ENCODE measurements at regions of chr5 and their contacts with region 1.

Region 1: GRCh38 chr5:40755407-40756365 is at the start of gene TTC33:
- DNase-seq: peak; percentile 97
- H3K4me3 ChIP-seq: peak within 1 kb of the TSS; percentile 87 to 98
- H3K27ac ChIP-seq: peak within 1 kb of the TSS; percentile 94 to 95
- H3K4me1 ChIP-seq: peaks cover 0 to 32% (median 14%) of the 10 kb centered on the region in 4 donors
- H3K27me3 ChIP-seq: no peaks in the 10 kb centered on the region
- CTCF ChIP-seq: peak; percentile 61 to 69

Region 2: GRCh38 chr5:40770764-40771163 is 15.1 kb after region 1 on chr5:
- intact Hi-C with region 1: no loop called
- DNase-seq: no peak
- H3K4me3 ChIP-seq: no peak overlapping the region
- H3K27ac ChIP-seq: no peak overlapping the region
- H3K4me1 ChIP-seq: peaks cover 0 to 2% (median under 1%) of the 10 kb centered on the region in 4 donors
- H3K27me3 ChIP-seq: no peaks in the 10 kb centered on the region
- CTCF ChIP-seq: no peak

Region 3: DNA sequence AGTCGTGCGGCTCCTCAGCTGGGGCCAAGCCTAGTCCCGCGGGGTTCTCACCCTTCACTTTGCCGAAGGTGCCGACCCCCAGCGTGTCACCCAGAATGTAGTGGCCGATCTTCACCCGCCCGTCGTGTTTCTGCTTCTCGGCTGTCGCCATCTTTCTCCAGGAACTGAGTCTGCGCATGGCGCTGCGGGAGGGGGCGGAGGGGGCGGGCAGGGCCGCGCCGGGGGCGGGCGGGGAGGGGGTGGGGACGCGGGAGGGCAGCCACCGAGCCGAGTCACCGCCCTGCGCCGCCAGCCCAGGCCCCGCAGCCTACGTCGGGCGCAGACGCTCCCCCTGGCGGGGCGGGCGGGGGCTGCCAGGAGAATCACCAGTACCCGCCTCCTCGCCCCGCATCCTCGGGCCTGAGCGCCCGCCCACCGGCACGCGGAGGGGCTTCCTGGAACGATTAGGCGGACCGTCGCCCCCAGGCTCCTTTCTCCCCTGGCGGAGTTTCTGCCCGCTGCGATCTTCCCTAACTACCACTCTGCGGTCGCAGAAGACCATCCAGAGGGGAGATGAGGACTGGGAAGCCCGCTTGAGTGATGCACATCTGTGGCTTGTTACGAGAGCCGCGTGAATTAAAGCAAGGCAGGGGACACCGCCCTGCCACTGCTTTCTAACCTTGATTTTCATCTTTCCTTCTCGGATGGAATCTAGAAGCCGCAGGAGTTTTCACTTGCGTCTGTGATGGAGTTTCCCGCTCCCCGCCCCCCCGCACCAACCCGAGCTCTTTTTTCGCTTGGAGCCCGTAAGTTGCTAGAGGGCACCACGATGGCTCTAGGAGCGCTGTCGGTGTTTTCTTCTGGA is 42.5 kb after region 1 on chr5 and contains the start of gene PRKAA1:
- intact Hi-C with region 1: no loop called
- DNase-seq: peak; percentile 88 to 95
- H3K4me3 ChIP-seq: peak within 1 kb of the TSS; percentile 63 to 89
- H3K27ac ChIP-seq: peak within 1 kb of the TSS; percentile 87 to 90
- H3K4me1 ChIP-seq: peaks cover 0 to 36% (median 14%) of the 10 kb centered on the region in 4 donors
- H3K27me3 ChIP-seq: no peaks in the 10 kb centered on the region
- CTCF ChIP-seq: peak; percentile 64 to 65

Region 4: GRCh38 chr5:40834849-40835787 is 79.4 kb after region 1 on chr5 and contains the start of gene RPL37:
- intact Hi-C with region 1: loop called (anchors 10 kb)
- DNase-seq: peak; percentile 95 to 98
- H3K4me3 ChIP-seq: peak within 1 kb of the TSS; percentile 61 to 64
- H3K27ac ChIP-seq: peak within 1 kb of the TSS; percentile 93 to 94
- H3K4me1 ChIP-seq: peaks cover 0 to 23% (median 15%) of the 10 kb centered on the region in 4 donors
- H3K27me3 ChIP-seq: no peaks in the 10 kb centered on the region
- CTCF ChIP-seq: no peak

Region 5: DNA sequence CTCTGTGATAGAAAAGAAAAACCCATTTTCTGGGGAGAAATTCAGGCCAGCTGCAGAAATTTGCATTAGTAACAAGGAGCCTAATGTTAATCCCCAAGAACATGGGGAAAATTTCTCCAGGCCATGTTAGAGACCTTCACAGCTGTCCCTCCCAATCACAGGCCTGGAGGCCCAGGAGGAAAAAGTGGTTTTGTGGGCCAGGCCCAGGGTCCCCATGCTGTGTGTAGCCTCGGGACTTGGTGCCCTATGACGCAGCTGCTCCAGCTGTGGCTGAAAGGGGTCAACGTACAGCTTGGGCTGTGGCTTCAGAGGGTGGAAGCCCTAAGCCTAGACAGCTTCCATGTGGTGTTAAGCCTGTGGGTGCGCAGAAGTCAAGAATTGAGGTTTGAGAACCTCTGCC is 126.6 kb after region 1 on chr5:
- intact Hi-C with region 1: loop called (anchors 5 kb)
- DNase-seq: no peak
- H3K4me3 ChIP-seq: no peak overlapping the region
- H3K27ac ChIP-seq: no peak overlapping the region
- H3K4me1 ChIP-seq: no peaks in the 10 kb centered on the region
- H3K27me3 ChIP-seq: no peaks in the 10 kb centered on the region
- CTCF ChIP-seq: no peak

Measured in tibial artery (tissue), 4 donors.